Esophagus muscularis mucosa (tissue), 4 donors: ENCODE measurements at regions of chr12 and their contacts with region 1.

Region 1: DNA sequence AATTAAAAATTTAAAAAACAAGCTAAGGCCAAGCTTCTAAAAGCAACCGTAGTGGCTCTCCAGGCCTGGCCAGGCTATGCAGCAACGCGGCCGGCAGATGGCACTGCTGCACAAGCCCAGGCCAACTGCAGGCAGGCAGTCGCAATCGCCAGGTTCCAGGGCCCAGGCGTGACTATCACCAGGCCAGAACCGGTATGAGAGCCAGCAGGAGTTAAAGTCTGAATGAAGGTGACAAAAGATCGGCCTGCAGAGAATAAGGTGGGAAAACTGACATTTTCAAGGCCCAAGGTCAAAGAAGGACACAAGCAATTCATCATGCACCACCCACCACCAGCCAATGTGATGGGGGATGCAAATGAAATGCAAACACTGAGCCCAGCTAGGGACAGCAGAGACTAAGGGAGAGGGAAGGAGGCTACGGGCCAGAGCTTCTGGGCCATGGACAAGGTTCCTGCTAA is 43.6 kb upstream of the ANO2 start:
- DNase-seq: no peak
- H3K4me3 ChIP-seq: no peak overlapping the region
- H3K27ac ChIP-seq: no peak overlapping the region
- H3K4me1 ChIP-seq: peaks cover 0 to 6% (median 0%) of the 10 kb centered on the region in 4 donors
- H3K27me3 ChIP-seq: no peaks in the 10 kb centered on the region
- CTCF ChIP-seq: peak; percentile 91 to 97 (median 94)
- EP300 ChIP-seq: no peak
- POLR2A ChIP-seq: no peak

Region 2: DNA sequence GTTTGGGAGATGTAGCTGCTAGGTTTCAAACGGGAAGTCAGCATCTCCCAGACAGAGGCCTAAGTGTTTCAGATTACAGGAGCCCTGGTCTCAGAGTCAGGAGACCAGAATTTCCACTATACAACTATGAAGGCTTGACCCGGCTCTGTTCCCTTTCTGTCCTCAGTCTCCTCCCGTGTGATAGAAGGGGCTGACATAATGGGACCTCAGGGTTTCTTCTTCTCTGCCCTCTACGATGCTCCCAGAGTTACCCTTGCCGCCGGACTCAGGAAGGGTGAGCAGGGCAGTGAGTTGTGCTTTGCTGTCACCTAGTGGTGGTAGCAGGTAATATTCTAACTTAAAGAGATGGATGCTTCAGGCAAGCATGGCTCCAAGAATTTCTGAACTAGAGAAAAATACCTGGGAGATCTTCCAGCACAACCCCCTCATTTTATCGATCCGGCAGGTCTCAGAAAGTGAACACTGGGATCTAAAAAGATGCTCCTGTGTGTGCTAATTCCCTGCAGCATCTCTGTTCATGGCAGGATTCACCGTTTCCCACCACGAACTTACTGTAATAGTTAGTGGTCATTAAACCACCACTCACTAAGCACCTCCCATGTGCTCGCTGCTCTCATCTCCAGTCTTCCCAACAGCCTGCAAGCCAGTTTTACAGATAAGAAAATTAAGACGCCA is 51.3 kb after region 1 on chr12:
- intact Hi-C with region 1: loop called (anchors 1 kb)
- DNase-seq: no peak
- H3K4me3 ChIP-seq: no peak overlapping the region
- H3K27ac ChIP-seq: no peak overlapping the region
- H3K4me1 ChIP-seq: peaks cover 0 to 4% (median 2%) of the 10 kb centered on the region in 4 donors
- H3K27me3 ChIP-seq: peaks cover 0 to 6% (median 0%) of the 10 kb centered on the region in 4 donors
- CTCF ChIP-seq: peak; percentile 86 to 89 (median 89)
- EP300 ChIP-seq: no peak
- POLR2A ChIP-seq: no peak

Region 3: GRCh38 chr12:6285063-6285477 is 296.4 kb after region 1 on chr12:
- intact Hi-C with region 1: loop called (anchors 5 kb)
- DNase-seq: no peak
- H3K4me3 ChIP-seq: no peak overlapping the region
- H3K27ac ChIP-seq: no peak overlapping the region
- H3K4me1 ChIP-seq: peaks cover 7 to 23% (median 17%) of the 10 kb centered on the region in 4 donors
- H3K27me3 ChIP-seq: no peaks in the 10 kb centered on the region
- CTCF ChIP-seq: peak in 2 of 3 experiments; percentile 94 to 98
- EP300 ChIP-seq: no peak
- POLR2A ChIP-seq: no peak

Region 4: DNA sequence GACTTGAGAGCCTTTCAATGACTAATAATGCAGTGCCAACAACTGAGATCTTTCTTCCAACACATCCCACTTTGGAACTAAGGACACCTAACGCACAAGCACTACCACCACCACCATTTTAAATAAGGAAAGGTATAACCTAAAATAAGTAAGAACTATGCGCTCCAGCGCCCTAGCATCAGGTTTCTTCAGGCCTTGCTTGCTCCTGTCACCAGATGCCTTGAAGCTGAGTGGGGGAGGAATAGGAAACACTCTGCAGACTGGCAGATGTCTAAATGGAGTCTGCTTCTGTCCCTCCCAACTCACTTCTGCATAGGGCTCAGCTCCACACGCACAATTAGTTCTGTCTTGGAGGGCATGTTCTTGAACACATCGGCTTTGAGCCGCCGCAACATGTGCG is 603.4 kb after region 1 on chr12:
- intact Hi-C with region 1: no loop called
- DNase-seq: no peak
- H3K4me3 ChIP-seq: no peak overlapping the region
- H3K27ac ChIP-seq: no peak overlapping the region
- H3K4me1 ChIP-seq: no peaks in the 10 kb centered on the region
- H3K27me3 ChIP-seq: no peaks in the 10 kb centered on the region
- CTCF ChIP-seq: no peak
- EP300 ChIP-seq: no peak
- POLR2A ChIP-seq: no peak